A549 (cell line): ENCODE measurements at regions of chr17 and their contacts with region 1.

Region 1: GRCh38 chr17:21043286-21044232 is 748 bp upstream of the USP22 start:
- DNase-seq: peak; percentile 91 to 99
- ATAC-seq: peak; percentile 91 to 96
- H3K4me3 ChIP-seq: peak overlapping the region; percentile 45
- H3K27ac ChIP-seq: peak overlapping the region; percentile 90
- H3K4me1 ChIP-seq: peaks cover 24% of the 10 kb centered on the region
- CTCF ChIP-seq: peak; percentile 86
- EP300 ChIP-seq: no peak
- POLR2A ChIP-seq: peak; percentile 91
- RAD21 ChIP-seq: peak in 1 of 2 experiments; percentile 64; a peak in 3 of 5 replicates

Region 2: DNA sequence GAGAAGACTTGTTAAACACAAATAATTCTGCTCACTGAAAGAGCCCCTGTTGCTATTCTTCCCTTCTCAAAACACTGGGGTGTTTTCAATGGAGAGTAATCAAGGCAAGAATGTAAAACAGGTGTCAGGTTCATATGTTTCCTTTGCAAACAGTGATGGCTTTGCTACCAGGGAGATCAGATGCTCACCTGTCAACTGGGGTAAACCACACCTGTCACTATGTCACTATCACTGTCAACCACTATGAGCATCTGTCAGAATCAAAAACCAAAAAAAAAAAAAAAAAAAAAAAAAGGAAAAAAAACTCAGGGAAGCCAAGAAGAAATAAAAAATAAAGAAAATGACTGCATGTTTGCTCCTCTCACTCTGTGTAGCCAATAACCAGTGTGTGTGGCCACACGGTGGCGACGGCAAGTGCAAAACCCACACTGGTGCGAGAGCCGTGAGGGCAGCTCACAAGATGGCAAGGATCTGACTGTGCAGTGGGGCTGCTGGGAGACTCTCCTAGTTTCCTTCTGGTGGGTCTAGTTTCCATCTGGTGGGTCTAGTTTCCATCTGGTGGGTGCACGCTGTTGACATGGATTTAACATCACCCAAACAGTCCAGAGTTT is 23.5 kb before region 1 on chr17:
- CTCF ChIA-PET with region 1: interaction called, 23 read pairs
- POLR2A ChIA-PET with region 1: interaction called, 5 read pairs
- DNase-seq: peak in 1 of 2 experiments; percentile 66
- ATAC-seq: peak; percentile 86 to 90
- H3K4me3 ChIP-seq: no peak overlapping the region
- H3K27ac ChIP-seq: no peak overlapping the region
- H3K4me1 ChIP-seq: no peaks in the 10 kb centered on the region
- CTCF ChIP-seq: peak; percentile 40
- EP300 ChIP-seq: no peak
- POLR2A ChIP-seq: no peak
- RAD21 ChIP-seq: peak; percentile 16 to 36; a peak in 2 of 5 replicates

Region 3: DNA sequence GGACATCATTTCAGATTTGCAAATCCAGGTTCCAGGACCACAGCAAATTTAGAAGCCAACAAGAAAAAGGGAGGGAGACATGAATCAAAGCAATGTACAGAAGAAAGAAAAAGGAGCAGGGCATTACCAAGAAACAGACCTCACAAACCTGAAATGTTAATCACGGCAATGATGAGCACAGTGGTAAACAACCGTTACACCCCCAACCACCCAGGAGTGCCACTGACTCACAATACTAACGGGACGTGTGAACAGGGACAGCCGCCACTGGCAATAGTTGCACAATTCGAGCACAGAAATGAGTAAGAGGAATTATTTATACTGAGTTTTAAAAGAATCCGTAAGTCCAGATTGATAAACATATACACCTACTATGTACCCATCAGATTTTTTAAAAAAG is 14.5 kb before region 1 on chr17:
- CTCF ChIA-PET with region 1: interaction called, 17 read pairs
- POLR2A ChIA-PET with region 1: interaction called, 12 read pairs
- DNase-seq: peak in 1 of 2 experiments; percentile 30
- ATAC-seq: peak; percentile 14 to 49; a peak in 2 of 6 replicates
- H3K4me3 ChIP-seq: no peak overlapping the region
- H3K27ac ChIP-seq: no peak overlapping the region
- H3K4me1 ChIP-seq: peaks cover 50% of the 10 kb centered on the region
- CTCF ChIP-seq: no peak
- EP300 ChIP-seq: no peak
- POLR2A ChIP-seq: no peak
- RAD21 ChIP-seq: no peak

Region 4: GRCh38 chr17:21058098-21058893 is 14.7 kb after region 1 on chr17:
- CTCF ChIA-PET with region 1: interaction called, 60 read pairs
- POLR2A ChIA-PET with region 1: interaction called, 36 read pairs
- DNase-seq: peak in 1 of 2 experiments; percentile 47
- ATAC-seq: peak; percentile 78 to 79
- H3K4me3 ChIP-seq: no peak overlapping the region
- H3K27ac ChIP-seq: no peak overlapping the region
- H3K4me1 ChIP-seq: no peaks in the 10 kb centered on the region
- CTCF ChIP-seq: no peak
- EP300 ChIP-seq: no peak
- POLR2A ChIP-seq: no peak
- RAD21 ChIP-seq: no peak

Region 5: DNA sequence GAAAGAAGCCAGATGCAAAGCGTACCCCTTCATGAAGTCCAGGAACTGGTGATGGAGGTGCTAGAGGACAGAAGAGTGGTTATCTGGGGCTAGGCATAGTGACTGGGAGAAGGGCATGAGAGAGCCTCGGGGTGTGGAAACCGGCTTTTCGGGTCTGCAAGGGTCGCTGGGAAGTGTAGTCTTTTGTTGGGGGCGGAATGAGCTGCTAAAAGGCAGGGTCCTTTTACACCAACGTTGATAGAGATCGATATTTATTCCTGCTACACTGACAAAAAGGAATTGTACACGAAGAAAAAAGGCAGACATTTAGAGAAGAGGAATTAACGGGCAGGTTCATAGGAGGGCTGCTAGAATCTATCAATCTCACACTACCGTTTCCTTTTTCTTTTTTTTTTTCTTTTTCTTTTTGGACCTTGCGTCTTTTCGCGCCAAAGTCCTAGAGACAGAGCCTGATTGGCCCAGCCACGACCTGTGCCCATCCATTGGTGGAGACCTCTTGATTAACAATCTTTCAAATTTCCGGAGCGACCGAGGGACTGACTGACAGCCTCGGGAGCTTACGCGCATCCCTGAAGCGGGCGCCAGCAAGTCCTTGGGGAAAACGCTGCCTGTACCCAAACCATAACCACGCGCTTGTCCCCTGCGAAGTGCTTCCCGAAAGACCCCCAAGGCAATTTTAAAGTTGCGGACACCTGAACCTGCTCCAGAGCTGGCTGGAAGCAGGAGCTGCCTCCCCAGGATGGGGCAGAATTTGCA is 55.6 kb after region 1 on chr17:
- CTCF ChIA-PET with region 1: interaction called, 25 read pairs
- POLR2A ChIA-PET with region 1: interaction called, 29 read pairs
- DNase-seq: peak; percentile 94 to 98
- ATAC-seq: peak; percentile 99
- H3K4me3 ChIP-seq: peak overlapping the region; percentile 56
- H3K27ac ChIP-seq: peak overlapping the region; percentile 57 to 78; a peak in 5 of 6 replicates
- H3K4me1 ChIP-seq: 0 out of 3 replicates have a peak, but pooled peaks cover 4% of the 10 kb centered on the region
- CTCF ChIP-seq: no peak
- EP300 ChIP-seq: no peak
- POLR2A ChIP-seq: peak; percentile 32
- RAD21 ChIP-seq: no peak